ENCODE measurements at regions of chr4 and their contacts with region 1.

Region 1: DNA sequence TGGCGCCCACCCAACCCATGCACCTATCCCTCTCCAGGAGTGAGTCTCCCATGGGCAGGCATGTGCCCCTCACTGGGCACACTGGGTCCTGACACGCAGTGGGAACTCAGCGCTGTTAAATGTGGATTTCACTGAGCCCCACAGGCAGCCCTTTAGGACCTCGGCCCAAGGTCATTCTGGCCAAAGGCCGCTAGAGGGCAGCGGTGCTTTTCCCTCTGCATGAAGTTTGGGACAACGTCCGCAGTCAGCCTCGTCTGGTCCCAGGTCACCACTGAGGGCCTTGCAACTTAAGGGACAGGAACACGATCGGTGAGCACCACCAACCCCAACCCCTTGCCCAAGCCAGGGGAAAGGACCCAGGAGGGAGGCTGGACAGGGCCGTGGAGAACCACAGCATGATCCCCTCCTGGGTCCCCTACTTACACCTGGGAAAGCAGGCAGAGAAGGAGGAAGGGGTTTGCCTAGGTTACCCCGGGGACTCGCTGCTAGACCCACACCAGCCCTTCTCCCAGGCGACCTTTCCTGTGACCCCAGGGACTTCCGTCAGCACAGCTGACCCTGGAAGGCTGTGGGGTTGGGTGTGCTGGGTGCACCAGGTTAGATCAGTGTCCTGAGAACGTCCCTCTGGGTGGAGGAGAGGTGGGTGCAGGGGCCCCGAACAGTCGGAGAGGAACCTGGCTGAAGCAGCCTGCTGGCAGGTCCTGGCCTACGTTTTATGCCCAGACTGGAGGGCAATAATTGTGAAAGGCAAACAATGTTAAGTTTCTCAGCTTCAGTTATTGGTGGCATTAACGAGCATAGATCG is 24.0 kb downstream of the CYTL1 start:
- DNase-seq: peak; percentile 85 to 90
- ATAC-seq: peak; percentile 68
- H3K4me3 ChIP-seq: no peak overlapping the region
- H3K27ac ChIP-seq: no peak overlapping the region
- H3K4me1 ChIP-seq: no peaks in the 10 kb centered on the region
- H3K27me3 ChIP-seq: no peaks in the 10 kb centered on the region

Region 2: GRCh38 chr4:4859390-4859842 is 135.9 kb before region 1 on chr4 and contains the start of gene MSX1:
- intact Hi-C with region 1: loop called in 1 of 2 experiments (anchors 5 kb)
- DNase-seq: peak; percentile 90 to 95
- ATAC-seq: peak; percentile 91
- H3K4me3 ChIP-seq: peak within 1 kb of the TSS; percentile 65 to 91
- H3K27ac ChIP-seq: peak within 1 kb of the TSS in 1 of 2 donors; percentile 13
- H3K4me1 ChIP-seq: no peaks in the 10 kb centered on the region
- H3K27me3 ChIP-seq: no peaks in the 10 kb centered on the region
- total RNA-seq, gene MSX1: 4.5 to 14.5 TPM

Region 3: DNA sequence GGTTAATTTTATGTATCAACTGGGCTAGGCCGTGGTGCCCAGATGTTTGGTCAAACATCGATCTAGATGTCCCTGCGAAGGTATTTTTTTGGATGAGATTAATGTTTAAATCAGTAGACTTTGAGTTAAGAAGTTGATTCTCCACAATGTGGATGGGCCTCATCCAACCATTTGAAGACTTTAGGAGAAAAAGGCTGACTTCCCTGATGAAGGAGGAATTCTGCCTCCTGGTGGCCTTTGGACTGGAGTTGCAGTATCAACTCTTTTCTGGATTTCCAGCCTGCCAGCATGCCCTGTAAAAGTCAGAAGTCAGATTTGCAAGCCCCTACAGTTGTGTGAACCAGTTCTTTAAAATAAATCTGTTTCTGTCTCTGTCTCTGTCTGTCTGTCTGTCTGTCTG is 147.4 kb after region 1 on chr4:
- intact Hi-C with region 1: loop called (anchors 2 to 10 kb)
- DNase-seq: no peak
- ATAC-seq: no peak
- H3K4me3 ChIP-seq: no peak overlapping the region
- H3K27ac ChIP-seq: no peak overlapping the region
- H3K4me1 ChIP-seq: no peaks in the 10 kb centered on the region
- H3K27me3 ChIP-seq: no peaks in the 10 kb centered on the region

Region 4: DNA sequence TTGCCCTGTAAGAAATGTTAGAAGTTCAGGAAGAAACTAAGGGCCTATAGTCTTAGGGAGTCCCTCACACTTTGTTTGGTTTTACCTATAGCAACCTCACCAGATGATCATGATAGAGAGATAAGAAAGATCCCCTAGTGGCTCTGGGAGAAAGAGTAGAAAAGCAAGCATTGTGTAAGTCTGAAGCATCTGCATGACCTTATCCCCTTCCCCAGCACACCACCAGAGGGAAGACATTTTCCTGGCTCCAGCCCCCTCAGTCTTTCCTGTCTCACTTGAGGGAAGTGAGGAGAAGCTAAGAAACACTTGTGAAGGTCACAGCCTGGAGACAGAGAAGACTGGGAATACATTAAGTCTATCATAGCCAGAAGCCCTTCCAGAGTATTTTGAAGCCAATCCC is 559.1 kb after region 1 on chr4:
- intact Hi-C with region 1: no loop called
- DNase-seq: no peak
- ATAC-seq: no peak
- H3K4me3 ChIP-seq: no peak overlapping the region
- H3K27ac ChIP-seq: no peak overlapping the region
- H3K4me1 ChIP-seq: no peaks in the 10 kb centered on the region
- H3K27me3 ChIP-seq: no peaks in the 10 kb centered on the region

Measured in aorta (tissue), 5 donors.